ENCODE measurements at regions of chr1 and their contacts with region 1.

Region 1: GRCh38 chr1:29984538-29985357 is 738.6 kb downstream of the MATN1 start:
- DNase-seq: no peak
- H3K4me3 ChIP-seq: no peak overlapping the region
- H3K27ac ChIP-seq: no peak overlapping the region
- H3K4me1 ChIP-seq: no peaks in the 10 kb centered on the region
- CTCF ChIP-seq: no peak

Region 2: DNA sequence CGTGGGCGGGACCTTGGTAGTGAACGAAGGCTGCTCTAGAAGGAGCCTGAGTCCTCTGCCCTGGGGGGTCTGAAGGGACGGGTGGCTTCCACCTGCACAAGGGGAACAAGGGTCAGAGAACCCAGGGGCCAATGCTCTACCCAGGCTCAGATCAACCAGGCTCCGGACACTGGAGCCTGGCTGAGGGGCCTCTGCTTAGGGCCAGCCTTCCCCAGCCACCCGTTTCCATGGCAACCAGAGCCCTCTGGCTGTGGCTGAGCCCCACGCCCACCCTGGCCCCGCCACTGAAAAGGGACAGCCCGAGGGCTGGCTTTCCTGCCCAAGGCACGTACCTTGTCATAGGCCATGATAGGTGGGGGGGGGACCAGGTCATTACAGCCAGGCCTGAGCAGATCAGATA is 23.9 kb before region 1 on chr1:
- CTCF ChIA-PET with region 1: interaction called, 13 read pairs
- POLR2A ChIA-PET with region 1: no interaction called
- intact Hi-C with region 1: no loop called
- DNase-seq: no peak
- H3K4me3 ChIP-seq: no peak overlapping the region
- H3K27ac ChIP-seq: no peak overlapping the region
- H3K4me1 ChIP-seq: no peaks in the 10 kb centered on the region
- CTCF ChIP-seq: no peak